ENCODE measurements at regions of chr15 and their contacts with region 1.

Region 1: GRCh38 chr15:92881802-92882696 is 18.1 kb upstream of the CHD2 start:
- DNase-seq: peak; percentile 100
- H3K27ac ChIP-seq: peak overlapping the region; percentile 98
- CTCF ChIP-seq: no peak

Region 2: DNA sequence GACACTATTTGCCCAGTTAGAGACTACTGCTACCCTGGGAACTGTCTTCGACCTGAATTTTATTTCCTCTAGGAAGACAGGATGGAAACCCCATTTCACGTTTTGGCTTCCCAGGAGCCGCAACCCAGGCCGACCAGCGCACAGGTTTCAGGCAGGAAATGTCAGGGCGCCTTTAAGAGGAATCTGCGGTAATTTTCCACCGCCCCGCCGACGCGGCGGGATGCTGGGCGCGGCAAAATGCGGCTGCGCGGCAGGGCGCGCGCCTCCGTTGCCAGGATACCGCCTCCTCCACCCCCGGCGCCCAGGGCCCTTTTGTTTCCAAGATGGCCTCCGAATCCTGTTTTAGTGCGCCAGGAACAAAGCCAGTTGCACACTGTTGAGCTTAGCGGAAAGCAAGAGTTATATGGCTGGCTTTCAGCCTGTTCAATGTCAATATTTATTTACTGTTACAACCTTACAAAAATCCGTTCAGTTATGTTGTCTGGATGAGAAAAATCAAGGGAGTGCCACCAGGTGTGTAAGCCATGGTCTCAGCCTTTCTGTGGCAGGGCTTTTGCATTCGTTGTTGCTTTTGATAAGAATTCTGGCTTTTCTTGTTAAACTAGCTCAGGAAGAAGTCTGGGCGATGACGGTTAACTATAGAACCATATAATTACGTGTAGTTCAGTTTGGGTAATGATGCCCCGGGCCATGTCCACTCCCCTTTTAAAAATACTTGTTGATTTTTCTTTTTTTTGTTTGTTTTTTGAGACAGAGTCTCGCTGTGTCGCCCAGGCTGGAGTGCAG is 61.6 kb before region 1 on chr15:
- CTCF ChIA-PET with region 1: no interaction called
- POLR2A ChIA-PET with region 1: interaction called, 39 read pairs
- DNase-seq: peak; percentile 97
- H3K27ac ChIP-seq: peak overlapping the region; percentile 81
- CTCF ChIP-seq: no peak

Region 3: DNA sequence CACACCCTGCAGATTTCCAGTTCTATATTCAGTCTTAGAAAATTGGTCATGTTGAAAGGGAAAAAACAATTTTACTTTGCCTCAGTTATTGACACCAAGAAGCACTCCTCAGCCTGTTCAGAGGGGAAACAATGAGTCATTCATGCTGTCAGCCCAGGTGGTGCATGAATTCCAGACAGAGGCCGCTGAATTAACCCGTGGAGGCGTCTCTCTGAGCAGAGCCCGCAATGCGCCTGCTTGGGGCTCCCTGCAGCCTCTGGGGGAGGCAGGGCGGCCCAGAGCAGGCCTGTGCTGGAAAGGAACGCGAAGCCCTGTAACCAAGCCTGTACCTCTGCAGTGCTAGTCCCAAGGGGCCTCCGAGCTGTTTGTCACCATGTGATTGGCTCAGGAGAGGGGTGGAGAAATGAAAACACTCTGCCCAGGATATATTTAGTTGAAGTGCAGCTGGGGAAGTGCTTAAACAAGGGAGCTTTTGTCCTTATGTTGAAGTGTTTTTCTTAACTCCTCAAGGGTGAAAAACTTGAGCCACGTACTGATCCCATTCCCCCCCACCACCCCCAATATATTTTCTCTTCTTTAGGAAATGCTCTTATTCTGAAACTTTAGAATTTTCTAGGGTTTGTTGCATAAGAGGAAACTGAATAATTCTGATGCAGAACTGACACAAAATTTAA is 50.3 kb before region 1 on chr15:
- CTCF ChIA-PET with region 1: no interaction called
- POLR2A ChIA-PET with region 1: interaction called, 22 read pairs
- DNase-seq: peak; percentile 95
- H3K27ac ChIP-seq: peak overlapping the region; percentile 95
- CTCF ChIP-seq: no peak

Measured in RWPE1 (cell line).